Posterior vena cava (tissue), 2 donors: ENCODE measurements at regions of chr20 and their contacts with region 1.

Region 1: DNA sequence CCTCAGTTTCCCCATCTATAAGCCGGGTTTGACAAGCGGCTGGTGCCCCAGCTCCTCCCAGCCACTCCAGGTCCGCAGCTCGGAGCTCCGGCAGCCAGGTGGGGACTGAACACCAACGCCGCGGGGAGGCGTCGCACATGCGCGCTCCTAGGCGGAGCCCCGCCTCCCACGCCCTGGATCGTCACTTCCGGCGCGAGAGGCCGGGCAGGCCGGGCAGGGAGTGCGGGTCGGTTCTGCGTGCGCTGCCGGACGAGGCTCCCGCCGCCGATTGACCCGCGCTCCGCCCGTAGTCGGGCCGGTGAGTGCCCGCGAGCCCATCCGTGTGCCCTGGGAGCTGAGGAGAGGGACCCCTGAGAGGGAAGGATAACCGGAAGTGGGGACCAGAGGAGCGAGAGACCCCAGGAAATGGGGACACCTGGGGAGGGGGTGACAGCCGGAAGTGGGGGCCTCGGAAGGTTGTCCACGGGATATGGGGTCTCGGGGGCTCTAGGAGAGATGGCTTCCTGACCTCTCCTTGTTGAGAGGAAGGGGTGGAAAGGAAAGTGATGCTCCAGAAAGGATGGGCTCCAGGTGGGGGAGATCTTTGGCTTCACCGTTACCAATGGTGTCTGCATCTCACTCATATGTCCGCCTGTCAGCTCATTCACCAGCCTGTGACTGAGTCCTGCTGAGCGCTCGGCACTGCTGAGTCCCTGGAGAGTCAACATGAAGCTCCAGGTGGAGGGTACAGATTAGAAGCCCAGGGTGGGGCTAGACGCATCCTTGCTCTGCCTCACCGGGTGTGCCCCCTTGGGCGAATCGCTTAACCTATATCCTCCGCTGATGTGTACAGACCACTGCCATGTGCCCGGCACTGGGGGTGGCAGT is at the start of gene TTPAL:
- DNase-seq: peak; percentile 96
- total RNA-seq, gene TTPAL: 11.8 to 14.3 TPM

Region 2: DNA sequence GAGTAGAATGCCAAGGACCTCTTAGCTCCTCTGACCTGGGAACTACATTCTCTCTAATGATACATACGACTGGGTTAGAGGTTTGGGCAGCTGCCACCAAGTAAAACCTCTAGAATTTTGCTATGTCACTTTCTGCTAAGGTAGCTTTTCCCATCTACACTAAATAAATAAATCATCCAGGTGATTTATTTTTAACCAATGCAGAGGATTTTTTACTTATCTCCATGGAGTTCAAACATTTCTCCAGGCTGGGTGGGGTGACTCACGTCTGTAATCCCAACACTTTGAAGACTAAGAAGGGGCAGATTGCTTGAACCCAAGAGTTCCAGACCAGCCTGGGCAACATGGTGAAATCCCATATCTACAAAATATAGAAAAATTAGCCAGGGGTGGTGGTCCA is 93.3 kb before region 1 on chr20:
- intact Hi-C with region 1: no loop called
- DNase-seq: no peak

Region 3: GRCh38 chr20:44438782-44439181 is 37.1 kb before region 1 on chr20:
- intact Hi-C with region 1: loop called in 1 of 2 experiments (anchors 2 kb)
- DNase-seq: no peak